H1 (cell line): ENCODE measurements at regions of chr2 and their contacts with region 1.

Region 1: DNA sequence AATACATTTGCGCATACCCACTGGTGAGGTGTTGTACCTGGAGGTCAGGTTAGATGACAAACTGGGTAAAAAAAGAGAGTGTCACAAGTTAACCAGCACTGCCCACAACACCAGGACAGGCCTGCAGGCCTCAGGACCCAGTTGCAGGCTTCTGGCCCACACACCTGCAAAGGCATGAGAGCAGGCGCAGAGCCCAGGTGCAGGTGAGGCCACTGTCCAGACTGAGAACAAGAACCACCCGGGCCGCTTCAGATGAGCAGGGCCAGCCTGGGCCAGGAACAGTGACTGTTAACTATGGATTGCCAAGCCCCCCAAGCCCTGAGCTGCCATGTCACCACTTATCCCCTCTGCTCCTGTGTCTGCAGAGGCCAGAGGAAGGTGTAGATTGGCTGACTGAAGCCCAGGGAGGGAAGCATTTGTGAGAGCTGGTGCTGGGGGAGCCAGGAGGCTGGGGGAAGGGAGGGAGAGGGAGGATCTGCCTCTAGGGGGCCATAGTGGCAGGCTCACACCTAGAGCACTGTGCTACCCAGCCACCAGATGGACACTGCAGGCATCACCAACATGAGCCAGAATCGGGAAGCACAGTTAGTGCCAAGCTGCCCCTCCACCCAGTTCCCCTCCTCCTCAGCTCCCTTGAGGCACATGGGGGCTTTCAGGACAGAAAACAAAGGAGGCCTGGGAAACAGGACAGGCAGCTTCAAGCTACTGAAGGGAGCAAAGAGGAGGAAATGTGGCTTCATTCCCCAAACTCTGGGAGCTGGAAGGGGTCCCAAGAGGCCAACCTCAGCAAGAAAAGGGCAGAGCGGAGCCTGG is 35.4 kb downstream of the SFXN5 start:
- DNase-seq: peak in 1 of 2 experiments; percentile 67
- H3K4me3 ChIP-seq: no peak overlapping the region
- H3K27ac ChIP-seq: peak overlapping the region; percentile 21
- H3K4me1 ChIP-seq: peaks cover 0 to 16% (median 8%) of the 10 kb centered on the region in 4 experiments; a peak in 5 of 7 replicates
- H3K27me3 ChIP-seq: no peaks in the 10 kb centered on the region
- CTCF ChIP-seq: peak; percentile 75 to 91 (median 81)
- EP300 ChIP-seq: no peak
- POLR2A ChIP-seq: no peak
- RAD21 ChIP-seq: peak; percentile 30 to 40; a peak in 3 of 4 replicates

Region 2: DNA sequence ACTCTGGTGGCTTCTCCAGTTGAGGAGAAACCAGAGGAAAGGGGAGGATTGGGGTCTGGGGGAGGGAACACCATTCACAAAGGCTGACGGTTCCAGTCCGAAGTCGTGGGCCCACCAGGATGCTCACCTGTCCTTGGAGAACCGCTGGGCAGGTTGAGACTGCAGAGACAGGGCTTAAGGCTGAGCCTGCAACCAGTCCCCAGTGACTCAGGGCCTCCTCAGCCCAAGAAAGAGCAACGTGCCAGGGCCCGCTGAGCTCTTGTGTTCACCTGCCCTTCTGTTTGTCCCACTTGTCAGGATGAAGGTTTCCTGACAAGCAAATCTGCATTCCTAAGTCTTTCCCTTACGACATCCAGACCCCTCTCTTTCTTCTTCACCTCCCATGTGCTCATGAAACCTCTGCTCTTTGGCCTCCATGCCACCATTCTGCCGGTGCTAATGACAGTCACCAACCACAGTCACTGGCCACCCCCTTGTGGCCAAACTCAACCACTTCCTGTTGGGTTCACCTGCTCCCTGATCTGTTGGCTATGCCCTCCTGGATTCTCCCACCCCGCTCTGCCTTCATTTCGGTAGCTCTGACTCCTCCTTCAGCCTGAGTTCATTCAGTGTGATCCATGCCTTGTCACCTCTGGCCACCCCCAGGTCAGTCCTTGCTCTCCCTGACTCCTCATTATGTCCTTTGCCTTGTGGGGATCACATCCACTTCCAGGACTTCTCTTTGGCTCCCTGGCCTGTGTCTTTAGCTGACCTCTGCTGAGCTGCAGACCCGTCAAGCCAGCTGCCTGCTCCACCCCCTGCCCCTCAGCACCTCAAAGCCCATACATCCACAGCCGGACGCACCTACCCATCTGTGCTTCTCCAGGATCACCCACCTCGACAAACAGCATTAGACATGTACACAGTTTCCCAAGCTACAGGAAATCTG is 101.2 kb before region 1 on chr2:
- CTCF ChIA-PET with region 1: no interaction called
- POLR2A ChIA-PET with region 1: no interaction called
- DNase-seq: no peak
- H3K4me3 ChIP-seq: no peak overlapping the region
- H3K27ac ChIP-seq: no peak overlapping the region
- H3K4me1 ChIP-seq: peaks cover 0 to 16% (median 9%) of the 10 kb centered on the region in 4 experiments; a peak in 5 of 7 replicates
- H3K27me3 ChIP-seq: peaks cover 0 to 19% (median 10%) of the 10 kb centered on the region in 4 experiments; a peak in 3 of 7 replicates
- CTCF ChIP-seq: peak in 2 of 3 experiments; percentile 77 to 79; a peak in 3 of 4 replicates
- EP300 ChIP-seq: no peak
- POLR2A ChIP-seq: no peak
- RAD21 ChIP-seq: peak; percentile 79 to 80

Region 3: GRCh38 chr2:73080711-73081131 is 44.6 kb after region 1 on chr2:
- CTCF ChIA-PET with region 1: interaction called, 11 read pairs
- POLR2A ChIA-PET with region 1: no interaction called
- DNase-seq: no peak
- H3K4me3 ChIP-seq: no peak overlapping the region
- H3K27ac ChIP-seq: no peak overlapping the region
- H3K4me1 ChIP-seq: peaks cover 0 to 9% (median 5%) of the 10 kb centered on the region in 4 experiments; a peak in 6 of 7 replicates
- H3K27me3 ChIP-seq: no peaks in the 10 kb centered on the region
- CTCF ChIP-seq: no peak
- EP300 ChIP-seq: no peak
- POLR2A ChIP-seq: no peak
- RAD21 ChIP-seq: no peak